ENCODE measurements at regions of chr3 and their contacts with region 1.

Region 1: GRCh38 chr3:58630076-58630709 is 36.4 kb downstream of the FAM3D start:
- DNase-seq: peak in 1 of 2 donors; percentile 78
- ATAC-seq: peak; percentile 23 to 72 (median 58)
- H3K4me3 ChIP-seq: no peak overlapping the region
- H3K27ac ChIP-seq: peak overlapping the region in 7 of 10 donors; percentile 68 to 94 (median 83)
- H3K4me1 ChIP-seq: peaks cover 5 to 52% (median 33%) of the 10 kb centered on the region in 9 donors
- H3K27me3 ChIP-seq: peaks cover 0 to 10% (median 3%) of the 10 kb centered on the region in 7 donors
- CTCF ChIP-seq: peak; percentile 91 to 98 (median 96)

Region 2: DNA sequence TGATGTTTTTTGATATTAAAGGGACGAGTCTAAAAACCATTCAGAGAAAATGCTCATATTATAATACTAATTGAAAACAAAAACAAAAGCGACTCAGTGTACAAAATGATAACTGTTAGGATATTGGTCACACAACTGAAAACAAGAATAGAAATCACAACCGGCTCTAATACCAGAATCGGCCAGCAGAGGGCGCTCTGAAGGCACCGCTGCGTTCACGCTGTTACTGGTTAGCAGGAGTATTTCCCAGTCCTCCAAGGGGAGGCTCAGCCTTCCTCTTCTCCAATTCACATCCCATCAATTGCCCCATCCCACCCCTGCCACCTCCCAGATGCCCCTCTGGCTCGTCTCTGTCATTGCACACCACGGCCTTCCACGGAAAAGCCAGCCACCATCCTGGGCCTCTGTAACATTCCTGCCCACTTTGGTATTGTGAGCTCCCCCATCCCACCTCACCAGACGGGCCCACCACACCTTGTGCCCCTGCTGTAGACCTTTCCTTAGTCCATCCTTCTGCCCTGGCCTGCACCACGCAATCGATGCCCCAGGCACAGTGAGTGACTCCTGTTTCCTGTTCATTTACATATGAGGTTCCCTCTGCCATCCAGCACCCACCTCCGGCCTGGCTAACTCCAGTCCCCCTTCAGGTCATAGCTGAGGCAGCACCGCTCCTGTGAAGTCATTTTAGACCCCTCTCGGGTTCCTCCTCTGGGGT is 61.5 kb before region 1 on chr3:
- intact Hi-C with region 1: loop called (anchors 1 to 2 kb)
- DNase-seq: peak; percentile 74 to 80
- ATAC-seq: peak; percentile 30 to 75 (median 50)
- H3K4me3 ChIP-seq: no peak overlapping the region
- H3K27ac ChIP-seq: peak overlapping the region in 1 of 10 donors; percentile 27
- H3K4me1 ChIP-seq: peaks cover 4 to 42% (median 32%) of the 10 kb centered on the region in 9 donors
- H3K27me3 ChIP-seq: no peaks in the 10 kb centered on the region
- CTCF ChIP-seq: peak; percentile 91 to 96 (median 95)

Region 3: DNA sequence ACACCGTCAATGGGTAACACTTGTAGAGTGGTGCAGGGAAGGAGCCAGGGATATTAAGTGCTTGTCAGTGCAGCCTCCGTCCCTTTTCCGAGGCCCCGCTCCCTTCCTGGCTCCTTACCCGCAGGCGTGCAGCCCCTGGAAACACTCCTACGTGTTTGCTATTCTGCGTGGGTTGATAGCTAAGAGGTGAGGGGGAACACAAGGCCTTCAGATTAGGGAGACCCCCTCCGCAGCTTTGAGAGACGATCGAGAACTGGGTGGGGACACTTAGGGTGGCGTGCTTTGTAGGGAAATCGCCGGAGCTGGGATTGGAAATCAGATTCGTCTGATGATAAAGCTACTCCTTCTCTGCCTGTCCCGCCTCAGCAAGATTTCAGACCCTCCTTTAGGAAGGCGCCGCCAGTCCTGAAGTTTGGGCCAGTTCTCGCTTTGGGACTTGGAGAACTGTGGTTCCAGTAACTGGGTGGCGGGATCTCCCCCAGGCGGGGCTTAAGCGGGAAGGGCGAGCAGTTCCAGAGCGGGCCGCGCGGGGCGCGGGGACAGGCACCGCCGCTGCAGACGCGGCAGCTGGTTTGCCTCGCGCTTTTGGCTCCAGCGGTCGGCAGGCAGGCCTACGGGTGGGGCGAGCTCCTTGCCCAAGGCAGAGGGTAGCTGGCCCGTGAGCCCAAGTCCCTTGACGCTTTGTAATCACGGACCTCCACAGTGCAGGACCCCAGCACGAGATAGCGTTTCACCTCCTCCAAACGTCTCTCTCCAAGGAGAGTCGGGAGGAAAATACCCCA is 45.0 kb before region 1 on chr3:
- intact Hi-C with region 1: loop called in 6 of 10 experiments (anchors 1 to 5 kb)
- DNase-seq: peak; percentile 86 to 90
- ATAC-seq: peak; percentile 93 to 98 (median 95)
- H3K4me3 ChIP-seq: peak overlapping the region; percentile 31 to 64 (median 57)
- H3K27ac ChIP-seq: peak overlapping the region; percentile 74 to 92 (median 81)
- H3K4me1 ChIP-seq: peaks cover 8 to 36% (median 20%) of the 10 kb centered on the region in 9 donors
- H3K27me3 ChIP-seq: peaks cover 0 to 32% (median 8%) of the 10 kb centered on the region in 7 donors
- CTCF ChIP-seq: peak; percentile 67 to 92 (median 84)

Region 4: DNA sequence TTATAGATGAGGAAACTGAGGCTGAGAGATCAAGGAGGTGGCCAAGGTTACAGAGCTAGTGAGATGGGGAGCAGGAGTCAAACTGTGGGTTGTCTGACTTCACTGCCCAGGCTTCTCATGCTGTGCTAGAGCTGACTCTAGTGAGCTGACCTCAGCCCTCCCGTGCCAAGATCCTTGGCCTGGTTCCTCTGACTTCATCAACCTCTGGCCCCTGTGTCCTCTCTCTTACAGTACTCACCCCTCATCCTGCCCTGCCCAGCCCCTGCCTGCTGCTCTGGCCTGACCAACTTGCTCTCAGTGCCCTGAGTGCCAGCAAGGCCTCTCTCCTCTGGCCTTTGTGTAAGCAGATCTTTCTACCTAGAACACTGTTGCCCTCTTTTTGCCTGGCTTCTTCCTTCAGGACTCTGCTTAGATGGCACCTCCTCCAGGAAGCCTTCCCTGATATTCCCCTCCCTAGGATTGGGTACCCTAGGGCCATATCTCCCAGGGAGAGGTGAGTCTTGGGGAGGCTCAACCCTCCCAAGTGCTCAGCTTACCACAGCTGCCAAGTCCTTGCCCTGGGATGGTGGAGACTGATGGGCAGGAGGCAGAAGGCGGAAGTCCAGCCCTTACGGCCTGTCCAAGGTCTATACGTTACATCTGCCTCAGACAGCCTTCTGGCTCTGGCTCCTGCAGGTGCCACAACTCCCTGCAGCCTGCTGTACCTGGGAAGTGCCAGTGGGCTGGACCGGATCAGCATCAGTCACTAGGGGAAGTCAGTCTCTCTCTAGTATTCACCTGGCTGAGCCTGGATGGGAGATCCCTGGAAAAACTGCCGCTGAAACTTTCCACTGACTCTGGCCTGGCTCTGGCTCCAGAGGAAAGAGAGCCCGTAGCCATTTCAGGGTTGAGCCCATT is 16.7 kb before region 1 on chr3:
- intact Hi-C with region 1: loop called in 1 of 10 experiments (anchors 2 kb)
- DNase-seq: no peak
- ATAC-seq: peak in 4 of 8 donors; percentile 3 to 46 (median 20)
- H3K4me3 ChIP-seq: no peak overlapping the region
- H3K27ac ChIP-seq: peak overlapping the region in 8 of 10 donors; percentile 3 to 69 (median 52)
- H3K4me1 ChIP-seq: peaks cover 0 to 42% (median 15%) of the 10 kb centered on the region in 9 donors
- H3K27me3 ChIP-seq: no peaks in the 10 kb centered on the region
- CTCF ChIP-seq: no peak

Measured in heart right ventricle (tissue), 16 donors.